ENCODE measurements at regions of chr15 and their contacts with region 1.

Region 1: DNA sequence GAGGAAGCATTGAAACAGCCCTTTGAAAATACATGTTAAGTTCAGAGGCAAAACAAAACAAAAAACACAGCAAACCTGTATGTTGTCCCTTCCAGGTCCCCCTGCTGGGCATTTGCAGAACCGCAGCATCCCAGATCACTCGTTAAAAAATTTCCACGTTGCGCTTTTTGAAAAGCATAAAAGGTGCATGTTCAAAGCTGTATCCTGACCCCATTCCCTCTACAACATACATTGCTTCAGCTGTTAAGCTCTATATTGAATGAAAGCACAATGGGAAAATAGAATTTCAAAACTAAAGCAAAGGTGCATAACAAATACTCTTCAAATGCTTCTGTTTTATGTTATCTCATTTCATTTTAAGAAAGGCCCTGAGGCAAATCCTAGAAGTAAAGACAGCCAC is 328.3 kb downstream of the THSD4 start:
- DNase-seq: peak in 5 of 9 donors; percentile 4 to 35 (median 13)
- ATAC-seq: no peak
- H3K4me3 ChIP-seq: no peak overlapping the region
- H3K4me3 Mint-ChIP-seq: no peak overlapping the region
- H3K27ac ChIP-seq: no peak overlapping the region
- H3K27ac Mint-ChIP-seq: no peak overlapping the region
- H3K4me1 ChIP-seq: no peaks in the 10 kb centered on the region
- H3K4me1 Mint-ChIP-seq: peaks cover 0 to 4% (median 0%) of the 10 kb centered on the region in 7 donors
- H3K27me3 ChIP-seq: no peaks in the 10 kb centered on the region
- H3K27me3 Mint-ChIP-seq: peaks cover 0 to 17% (median 6%) of the 10 kb centered on the region in 5 donors

Region 2: GRCh38 chr15:70825841-70826240 is 617.7 kb before region 1 on chr15:
- CTCF ChIA-PET with region 1: interaction called, 4 read pairs
- POLR2A ChIA-PET with region 1: no interaction called
- intact Hi-C with region 1: loop called in 1 of 2 experiments (anchors 2 kb)
- DNase-seq: no peak
- ATAC-seq: no peak
- H3K4me3 ChIP-seq: no peak overlapping the region
- H3K4me3 Mint-ChIP-seq: no peak overlapping the region
- H3K27ac ChIP-seq: no peak overlapping the region
- H3K27ac Mint-ChIP-seq: no peak overlapping the region
- H3K4me1 ChIP-seq: no peaks in the 10 kb centered on the region
- H3K4me1 Mint-ChIP-seq: peaks cover 0 to 8% (median 0%) of the 10 kb centered on the region in 7 donors
- H3K27me3 ChIP-seq: no peaks in the 10 kb centered on the region
- H3K27me3 Mint-ChIP-seq: peaks cover 7 to 33% (median 20%) of the 10 kb centered on the region in 5 donors

Region 3: DNA sequence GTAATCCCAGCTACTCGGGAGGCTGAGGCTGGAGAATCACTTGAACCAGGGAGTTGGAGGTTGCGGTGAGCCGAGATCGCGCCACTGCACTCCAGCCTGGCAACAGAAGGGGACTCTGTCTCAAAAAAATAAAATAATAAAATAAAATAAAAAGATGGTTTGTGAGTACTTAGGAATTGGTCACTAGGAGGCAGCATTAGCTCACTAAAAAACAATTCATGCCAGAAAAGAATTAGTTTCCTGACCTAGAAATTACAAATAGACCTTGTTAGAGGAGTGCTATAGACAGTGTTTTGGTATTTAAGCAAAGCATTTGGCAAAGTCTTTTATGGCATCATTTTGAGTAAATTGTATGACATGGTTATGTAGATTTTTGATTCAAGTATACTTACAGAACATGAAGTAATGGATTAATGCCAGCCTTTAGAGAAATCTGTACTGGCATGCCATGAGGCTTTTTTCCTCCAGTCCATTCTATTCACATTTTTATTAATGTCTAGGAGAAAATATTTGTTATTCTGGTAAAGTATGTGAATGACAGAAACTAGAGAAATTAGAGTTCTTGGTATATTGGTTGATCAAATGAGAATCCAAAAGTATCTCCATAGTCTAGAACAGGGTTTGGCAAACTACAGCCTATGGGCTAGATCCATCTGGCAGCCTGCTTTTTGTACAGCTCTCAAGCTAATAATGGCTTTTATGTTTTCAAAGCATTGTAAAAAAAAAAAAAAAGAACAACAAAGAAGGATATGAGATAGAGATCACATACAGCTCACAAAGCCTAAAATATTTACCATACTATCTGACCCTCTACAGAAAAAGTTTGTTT is 469.3 kb before region 1 on chr15:
- CTCF ChIA-PET with region 1: no interaction called
- POLR2A ChIA-PET with region 1: no interaction called
- intact Hi-C with region 1: loop called in 1 of 2 experiments (anchors 5 kb)
- DNase-seq: no peak
- ATAC-seq: no peak
- H3K4me3 ChIP-seq: no peak overlapping the region
- H3K4me3 Mint-ChIP-seq: no peak overlapping the region
- H3K27ac ChIP-seq: no peak overlapping the region
- H3K27ac Mint-ChIP-seq: no peak overlapping the region
- H3K4me1 ChIP-seq: no peaks in the 10 kb centered on the region
- H3K4me1 Mint-ChIP-seq: no peaks in the 10 kb centered on the region
- H3K27me3 ChIP-seq: no peaks in the 10 kb centered on the region
- H3K27me3 Mint-ChIP-seq: peaks cover 7 to 21% (median 11%) of the 10 kb centered on the region in 5 donors

Region 4: DNA sequence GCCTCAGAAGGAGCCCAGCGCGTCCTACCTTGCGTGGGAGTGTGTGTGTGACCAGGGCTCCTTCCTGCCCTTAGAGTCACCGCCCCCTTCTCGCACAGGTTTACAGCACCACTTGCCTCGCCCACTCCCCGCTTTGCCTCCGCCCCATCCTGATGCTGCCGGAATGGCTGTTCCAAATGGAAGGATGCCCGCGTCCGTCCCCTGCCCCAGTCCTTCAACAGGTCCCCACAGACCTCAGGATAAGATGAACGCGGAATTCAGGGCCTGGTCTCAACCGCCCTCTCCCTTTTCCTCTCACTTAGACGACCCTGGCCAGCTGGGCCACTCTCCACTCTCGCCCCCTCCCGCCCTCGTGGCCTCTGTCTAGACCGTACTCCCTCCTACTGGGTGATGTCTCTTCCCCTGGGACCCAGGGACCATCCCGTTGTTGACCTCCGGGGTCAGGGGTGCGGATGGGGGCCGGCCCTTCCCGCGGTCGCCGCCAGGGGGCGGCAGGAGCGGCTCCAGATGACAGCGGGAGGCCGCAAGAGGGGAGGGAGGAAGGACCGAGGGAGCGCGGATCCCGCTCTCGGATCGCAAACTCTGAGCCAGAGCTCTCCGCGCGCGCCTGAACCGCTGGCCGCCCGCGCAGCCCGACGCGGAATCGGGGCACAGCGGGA is 328.5 kb before region 1 on chr15 and contains the start of gene THSD4:
- CTCF ChIA-PET with region 1: interaction called, 3 read pairs
- POLR2A ChIA-PET with region 1: no interaction called
- intact Hi-C with region 1: loop called in 1 of 2 experiments (anchors 1 kb)
- DNase-seq: peak in 8 of 9 donors; percentile 8 to 76 (median 30)
- ATAC-seq: peak; percentile 75
- H3K4me3 ChIP-seq: no peak within 1 kb of the TSS
- H3K4me3 Mint-ChIP-seq: peak within 1 kb of the TSS; percentile 52 to 81 (median 72)
- H3K27ac ChIP-seq: no peak within 1 kb of the TSS
- H3K27ac Mint-ChIP-seq: no peak within 1 kb of the TSS
- H3K4me1 ChIP-seq: peaks cover 0 to 7% of the 10 kb centered on the region in 2 donors
- H3K4me1 Mint-ChIP-seq: peaks cover 6 to 10% (median 7%) of the 10 kb centered on the region in 7 donors
- H3K27me3 ChIP-seq: peaks cover 3% of the 10 kb centered on the region in 2 donors
- H3K27me3 Mint-ChIP-seq: peaks cover 52 to 63% (median 59%) of the 10 kb centered on the region in 5 donors
- total RNA-seq, gene THSD4: not detected

Region 5: DNA sequence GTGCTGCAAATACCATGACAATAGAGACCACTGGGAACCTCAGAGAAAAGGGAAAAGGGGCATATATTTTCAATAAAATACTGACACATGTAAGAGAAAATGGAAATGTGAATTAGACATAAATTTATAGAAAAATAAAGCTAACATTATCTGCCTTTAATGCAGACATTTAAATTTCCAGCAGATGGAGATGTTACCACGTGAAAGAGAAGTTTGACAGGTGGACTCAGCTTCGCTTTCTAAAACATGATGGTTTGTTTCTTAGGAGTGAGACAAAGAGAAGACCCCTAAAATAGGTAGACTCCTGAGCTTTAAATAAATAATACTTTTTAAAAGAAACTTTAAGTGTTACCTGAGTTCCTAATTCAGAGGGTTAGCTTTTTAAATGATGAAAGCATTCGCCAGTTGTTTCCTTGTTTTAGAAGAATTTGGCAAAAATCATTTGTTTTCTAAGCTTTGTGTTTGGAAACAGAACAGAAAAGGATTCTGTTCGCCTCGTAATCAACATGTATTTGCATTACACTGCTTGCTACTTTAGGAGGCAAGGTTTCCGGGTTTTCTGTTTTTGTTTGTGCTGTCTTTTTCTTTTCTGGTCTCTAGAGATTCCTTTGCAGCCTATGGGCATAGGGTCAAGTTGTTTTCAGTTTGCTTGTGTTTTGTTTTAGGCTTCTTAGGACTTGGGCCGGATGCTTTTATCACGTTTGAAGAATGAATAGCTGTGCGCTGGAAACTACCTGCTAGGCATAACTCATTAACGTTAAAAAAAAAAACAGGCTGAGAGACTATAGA is 56.9 kb before region 1 on chr15:
- CTCF ChIA-PET with region 1: interaction called, 22 read pairs
- POLR2A ChIA-PET with region 1: no interaction called
- intact Hi-C with region 1: loop called in 1 of 2 experiments (anchors 1 kb)
- DNase-seq: peak in 3 of 9 donors; percentile 3 to 26 (median 17)
- ATAC-seq: no peak
- H3K4me3 ChIP-seq: no peak overlapping the region
- H3K4me3 Mint-ChIP-seq: peak overlapping the region in 1 of 10 donors; percentile 17
- H3K27ac ChIP-seq: no peak overlapping the region
- H3K27ac Mint-ChIP-seq: no peak overlapping the region
- H3K4me1 ChIP-seq: no peaks in the 10 kb centered on the region
- H3K4me1 Mint-ChIP-seq: peaks cover 0 to 13% (median 5%) of the 10 kb centered on the region in 7 donors
- H3K27me3 ChIP-seq: no peaks in the 10 kb centered on the region
- H3K27me3 Mint-ChIP-seq: peaks cover 6 to 38% (median 34%) of the 10 kb centered on the region in 5 donors